ENCODE measurements at regions of chr14 and their contacts with region 1.

Region 1: GRCh38 chr14:87745507-87746118 is 247.4 kb downstream of the GALC start:
- DNase-seq: peak; percentile 23
- ATAC-seq: peak; percentile 84
- H3K4me3 ChIP-seq: no peak overlapping the region
- H3K27ac ChIP-seq: no peak overlapping the region
- H3K4me1 ChIP-seq: no peaks in the 10 kb centered on the region
- H3K27me3 ChIP-seq: no peaks in the 10 kb centered on the region
- CTCF ChIP-seq: peak; percentile 64
- EP300 ChIP-seq: no peak
- POLR2A ChIP-seq: no peak
- RAD21 ChIP-seq: no peak

Region 2: GRCh38 chr14:87896393-87897380 is 151.1 kb after region 1 on chr14:
- CTCF ChIA-PET with region 1: interaction called, 12 read pairs
- POLR2A ChIA-PET with region 1: no interaction called
- in situ Hi-C with region 1: loop called (anchors 5 kb)
- intact Hi-C with region 1: no loop called
- DNase-seq: peak; percentile 41
- ATAC-seq: peak; percentile 70
- H3K4me3 ChIP-seq: no peak overlapping the region
- H3K27ac ChIP-seq: no peak overlapping the region
- H3K4me1 ChIP-seq: no peaks in the 10 kb centered on the region
- H3K27me3 ChIP-seq: peaks cover 0 to 11% of the 10 kb centered on the region in 2 experiments; a peak in 2 of 5 replicates
- CTCF ChIP-seq: peak; percentile 68
- EP300 ChIP-seq: no peak
- POLR2A ChIP-seq: no peak
- RAD21 ChIP-seq: no peak